Posterior vena cava (tissue), 2 donors: ENCODE measurements at regions of chr4 and their contacts with region 1.

Region 1: DNA sequence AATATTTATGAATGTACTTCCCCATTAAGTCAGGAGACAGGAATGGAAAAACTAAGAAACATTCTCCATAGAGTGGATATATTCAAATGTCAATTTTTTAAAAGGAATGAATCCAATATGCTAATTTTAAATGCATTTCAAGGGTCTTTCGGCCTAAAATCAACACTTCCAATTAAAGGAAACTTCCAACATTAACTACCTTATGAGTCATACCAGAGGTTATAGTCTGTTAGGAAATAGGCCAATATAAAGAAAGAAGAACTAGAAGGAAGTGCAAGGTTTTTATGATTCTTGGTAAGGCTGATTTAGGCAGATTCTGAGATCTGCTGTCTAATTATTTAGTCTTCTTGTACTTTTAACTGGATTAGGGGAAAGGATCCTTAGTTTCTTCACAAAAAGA is 260.1 kb upstream of the EDNRA start:
- DNase-seq: no peak

Region 2: DNA sequence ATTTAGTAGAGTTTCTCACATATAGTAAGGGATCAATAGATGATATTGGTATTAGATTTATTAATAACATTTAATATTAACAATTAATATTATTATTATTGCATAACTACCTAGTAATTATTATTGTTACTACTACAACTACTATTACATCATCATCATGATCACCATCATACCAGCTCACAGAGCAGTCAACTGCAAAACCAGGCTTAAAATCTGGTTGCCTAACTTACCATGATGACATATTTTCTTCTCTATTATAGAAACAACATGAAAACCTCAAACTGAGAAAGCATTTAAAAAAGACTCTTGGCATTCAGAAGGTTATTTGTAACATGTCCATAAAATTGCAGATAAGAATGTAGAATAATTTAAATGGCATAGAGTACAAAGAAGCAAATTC is 28.2 kb before region 1 on chr4:
- intact Hi-C with region 1: no loop called
- DNase-seq: no peak

Region 3: DNA sequence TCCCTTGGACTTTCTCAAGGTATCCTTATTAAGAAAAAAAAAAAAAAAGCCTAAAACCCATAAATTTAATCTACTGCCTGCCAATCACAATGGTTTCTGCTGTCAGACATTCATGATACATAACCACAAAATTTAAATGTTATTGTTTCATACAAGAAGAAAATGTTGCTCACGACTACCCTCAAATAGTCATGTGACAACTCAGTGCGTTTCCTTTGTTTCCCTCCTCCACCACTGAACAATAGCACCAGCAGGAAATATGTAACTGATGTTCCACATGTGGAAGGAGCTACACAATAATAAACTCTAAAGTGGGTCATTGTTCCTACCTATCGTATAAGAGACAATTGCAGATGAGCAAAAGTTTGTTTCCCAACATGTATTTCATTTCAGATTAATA is 16.0 kb after region 1 on chr4:
- intact Hi-C with region 1: no loop called
- DNase-seq: no peak

Region 4: GRCh38 chr4:147247579-147247978 is 26.7 kb after region 1 on chr4:
- intact Hi-C with region 1: loop called in 1 of 2 experiments (anchors 2 kb)
- DNase-seq: no peak

Region 5: GRCh38 chr4:147518846-147519767 is 298.3 kb after region 1 on chr4:
- intact Hi-C with region 1: loop called in 1 of 2 experiments (anchors 5 kb)
- DNase-seq: no peak

Region 6: GRCh38 chr4:147547314-147548056 is 326.7 kb after region 1 on chr4:
- intact Hi-C with region 1: no loop called
- DNase-seq: no peak

Region 7: GRCh38 chr4:148776941-148777340 is 1556.1 kb after region 1 on chr4:
- intact Hi-C with region 1: no loop called
- DNase-seq: no peak